ENCODE measurements at regions of chr6 and their contacts with region 1.

Region 1: DNA sequence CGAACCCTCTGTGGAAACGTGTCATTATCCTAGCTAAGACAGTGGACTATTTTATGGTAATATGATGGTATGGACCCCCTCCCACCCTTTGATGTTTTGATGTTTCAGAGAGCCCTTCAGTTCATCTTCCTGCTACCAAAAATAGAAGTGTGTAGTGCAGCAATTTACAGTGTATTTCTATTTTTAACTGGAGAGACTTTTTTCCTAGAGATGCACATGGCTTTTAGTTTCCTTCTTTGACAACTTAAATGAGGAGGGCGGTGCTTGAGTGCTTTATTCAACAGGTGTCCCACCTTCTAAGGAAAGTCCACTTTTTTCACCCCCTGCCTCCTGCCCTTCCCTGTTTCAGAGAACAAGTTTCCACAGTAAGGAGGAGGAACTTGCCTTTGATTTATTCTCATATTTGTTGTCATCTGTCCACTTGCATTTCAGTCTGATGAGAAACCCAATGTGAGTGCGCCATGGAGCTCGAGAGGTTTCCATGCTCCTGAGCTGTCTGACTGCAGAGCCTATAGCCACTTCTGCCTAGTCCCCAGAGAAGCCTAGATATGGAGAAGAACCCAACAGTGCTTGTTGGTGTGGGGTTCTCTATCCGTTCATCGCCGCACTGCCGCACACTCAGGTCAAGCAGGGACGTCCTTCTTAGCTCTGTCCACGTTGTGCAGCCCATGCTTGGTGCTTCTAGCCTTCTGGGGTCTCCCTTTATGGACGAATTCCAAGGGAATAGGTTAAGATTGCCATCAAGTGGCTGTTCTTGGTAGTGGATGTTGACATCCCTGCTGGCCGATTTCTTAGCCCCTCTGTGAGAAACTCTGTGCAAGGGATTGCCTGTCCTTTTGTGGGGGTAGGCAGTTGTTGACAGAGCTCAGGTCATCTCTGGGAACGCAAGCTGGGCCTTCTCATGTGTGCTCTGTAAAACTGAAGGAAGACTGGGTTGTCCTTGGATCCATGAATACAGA is 144.2 kb downstream of the JARID2 start:
- DNase-seq: peak; percentile 52
- ATAC-seq: peak; percentile 56
- H3K4me3 ChIP-seq: no peak overlapping the region
- H3K27ac ChIP-seq: peak overlapping the region; percentile 40
- H3K4me1 ChIP-seq: peaks cover 56% of the 10 kb centered on the region
- H3K27me3 ChIP-seq: no peaks in the 10 kb centered on the region
- CTCF ChIP-seq: peak; percentile 65 to 69 (median 68)
- EP300 ChIP-seq: no peak
- POLR2A ChIP-seq: no peak
- RAD21 ChIP-seq: peak; percentile 87

Region 2: DNA sequence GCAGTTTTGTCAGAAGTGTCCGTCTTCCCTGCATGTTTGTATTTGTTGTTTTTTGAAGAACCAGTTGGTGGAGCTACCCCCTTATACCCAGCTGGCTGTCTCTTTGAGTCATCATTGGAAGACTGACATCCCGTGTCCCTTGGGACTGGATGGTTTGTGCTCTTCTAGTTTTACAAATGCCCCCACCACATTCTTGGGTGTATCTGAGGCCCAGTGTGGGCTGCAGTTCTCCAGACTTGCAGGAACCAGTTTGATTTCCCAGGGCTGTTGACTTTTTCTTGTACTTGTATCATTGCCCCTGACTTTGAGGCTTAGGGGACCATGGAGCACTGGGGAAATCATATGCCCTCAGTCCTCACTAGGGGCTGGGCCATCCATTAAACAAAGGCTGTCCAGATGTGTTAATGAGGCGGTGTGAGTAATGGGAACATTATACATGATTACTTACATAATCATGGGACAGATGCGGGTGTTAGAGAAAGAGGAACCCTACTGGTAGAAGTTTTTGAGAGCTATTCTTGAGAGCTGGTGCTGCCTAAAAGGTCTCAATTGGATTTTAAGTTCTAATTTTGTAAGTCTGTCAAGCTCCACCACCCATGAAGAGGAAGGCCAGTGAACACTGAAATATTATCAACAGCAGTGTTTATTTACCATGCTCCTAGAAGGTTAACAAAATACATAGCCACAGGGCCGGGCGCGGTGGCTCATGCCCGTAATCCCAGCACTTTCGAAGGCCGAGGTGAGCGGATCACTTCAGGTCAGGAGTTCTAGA is 135.8 kb before region 1 on chr6:
- CTCF ChIA-PET with region 1: interaction called, 75 read pairs
- POLR2A ChIA-PET with region 1: interaction called, 5 read pairs
- RAD21 ChIA-PET with region 1: interaction called, 63 read pairs
- SMC1A ChIA-PET with region 1: interaction called, 95 read pairs
- in situ Hi-C with region 1: loop called (anchors 5 kb)
- intact Hi-C with region 1: loop called (anchors 1 kb)
- DNase-seq: peak; percentile 82
- ATAC-seq: peak; percentile 50
- H3K4me3 ChIP-seq: peak overlapping the region; percentile 42; the same call in 1 of the 2 replicates
- H3K27ac ChIP-seq: peak overlapping the region; percentile 92
- H3K4me1 ChIP-seq: peaks cover 78% of the 10 kb centered on the region
- H3K27me3 ChIP-seq: no peaks in the 10 kb centered on the region
- CTCF ChIP-seq: peak; percentile 40 to 65 (median 50); a peak in 5 of 6 replicates
- EP300 ChIP-seq: peak in 1 of 2 experiments; percentile 27; a peak in 1 of 4 replicates
- POLR2A ChIP-seq: no peak
- RAD21 ChIP-seq: peak; percentile 71

Region 3: GRCh38 chr6:15305496-15305895 is 84.5 kb before region 1 on chr6:
- CTCF ChIA-PET with region 1: interaction called, 4 read pairs
- POLR2A ChIA-PET with region 1: interaction called, 5 read pairs
- RAD21 ChIA-PET with region 1: interaction called, 11 read pairs
- SMC1A ChIA-PET with region 1: interaction called, 13 read pairs
- in situ Hi-C with region 1: no loop called
- intact Hi-C with region 1: no loop called
- DNase-seq: no peak
- ATAC-seq: peak; percentile 67
- H3K4me3 ChIP-seq: peak overlapping the region; percentile 37; the same call in 1 of the 2 replicates
- H3K27ac ChIP-seq: peak overlapping the region; percentile 87
- H3K4me1 ChIP-seq: peaks cover 68% of the 10 kb centered on the region
- H3K27me3 ChIP-seq: no peaks in the 10 kb centered on the region
- CTCF ChIP-seq: no peak
- EP300 ChIP-seq: peak in 1 of 2 experiments; percentile 55; a peak in 2 of 4 replicates
- POLR2A ChIP-seq: no peak
- RAD21 ChIP-seq: no peak

Region 4: GRCh38 chr6:15358579-15359327 is 31.3 kb before region 1 on chr6:
- CTCF ChIA-PET with region 1: interaction called, 15 read pairs
- POLR2A ChIA-PET with region 1: interaction called, 4 read pairs
- RAD21 ChIA-PET with region 1: interaction called, 28 read pairs
- SMC1A ChIA-PET with region 1: interaction called, 68 read pairs
- in situ Hi-C with region 1: no loop called
- intact Hi-C with region 1: no loop called
- DNase-seq: peak; percentile 75
- ATAC-seq: peak; percentile 80
- H3K4me3 ChIP-seq: peak overlapping the region; percentile 27
- H3K27ac ChIP-seq: peak overlapping the region; percentile 81
- H3K4me1 ChIP-seq: peaks cover 75% of the 10 kb centered on the region
- H3K27me3 ChIP-seq: no peaks in the 10 kb centered on the region
- CTCF ChIP-seq: no peak
- EP300 ChIP-seq: no peak; a peak in 1 of 4 replicates
- POLR2A ChIP-seq: no peak
- RAD21 ChIP-seq: no peak

Region 5: GRCh38 chr6:15420959-15421438 is 31.0 kb after region 1 on chr6:
- CTCF ChIA-PET with region 1: interaction called, 30 read pairs
- POLR2A ChIA-PET with region 1: interaction called, 4 read pairs
- RAD21 ChIA-PET with region 1: interaction called, 13 read pairs
- SMC1A ChIA-PET with region 1: interaction called, 22 read pairs
- in situ Hi-C with region 1: no loop called
- intact Hi-C with region 1: no loop called
- DNase-seq: no peak
- ATAC-seq: peak; percentile 88
- H3K4me3 ChIP-seq: peak overlapping the region; percentile 59
- H3K27ac ChIP-seq: peak overlapping the region; percentile 90
- H3K4me1 ChIP-seq: peaks cover 29% of the 10 kb centered on the region
- H3K27me3 ChIP-seq: no peaks in the 10 kb centered on the region
- CTCF ChIP-seq: no peak
- EP300 ChIP-seq: 0 out of 4 replicates have a peak, but pooled peaks of 1 of the 2 experiments have one; percentile 9
- POLR2A ChIP-seq: no peak
- RAD21 ChIP-seq: no peak

Region 6: DNA sequence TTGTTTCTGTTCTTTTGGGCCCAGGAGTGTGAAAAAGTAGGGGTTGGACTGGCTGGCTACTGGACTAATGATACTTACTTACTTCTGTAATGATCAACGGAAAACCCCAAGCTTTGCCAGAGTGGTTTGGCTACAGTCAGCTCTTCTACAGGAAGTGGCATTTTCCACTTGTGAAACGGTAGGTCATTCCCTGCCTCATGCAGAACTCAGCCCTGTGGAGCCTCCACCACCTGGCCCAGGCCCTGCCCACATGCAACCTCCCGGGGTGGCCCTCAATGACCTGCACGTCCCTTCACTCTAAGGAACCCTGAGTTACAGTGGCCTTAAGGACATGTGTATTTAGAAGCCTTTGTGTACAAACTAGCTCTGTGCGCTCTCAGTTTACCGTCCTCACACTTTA is 132.4 kb after region 1 on chr6:
- CTCF ChIA-PET with region 1: no interaction called
- POLR2A ChIA-PET with region 1: no interaction called
- RAD21 ChIA-PET with region 1: no interaction called
- SMC1A ChIA-PET with region 1: no interaction called
- in situ Hi-C with region 1: no loop called
- intact Hi-C with region 1: no loop called
- DNase-seq: no peak
- ATAC-seq: peak; percentile 64
- H3K4me3 ChIP-seq: no peak overlapping the region
- H3K27ac ChIP-seq: no peak overlapping the region
- H3K4me1 ChIP-seq: no peaks in the 10 kb centered on the region
- H3K27me3 ChIP-seq: no peaks in the 10 kb centered on the region
- CTCF ChIP-seq: no peak
- EP300 ChIP-seq: no peak
- POLR2A ChIP-seq: no peak
- RAD21 ChIP-seq: no peak

Measured in GM12878 (cell line).